ENCODE measurements at regions of chr2 and their contacts with region 1.

Region 1: GRCh38 chr2:43194121-43194869 is 32.1 kb downstream of the ZFP36L2 start:
- DNase-seq: no peak
- H3K4me3 Mint-ChIP-seq: peak overlapping the region; percentile 79
- H3K27ac Mint-ChIP-seq: peak overlapping the region; percentile 92
- H3K4me1 Mint-ChIP-seq: peaks cover 51% of the 10 kb centered on the region
- H3K27me3 Mint-ChIP-seq: no peaks in the 10 kb centered on the region

Region 2: GRCh38 chr2:43139996-43140621 is 54.2 kb before region 1 on chr2:
- intact Hi-C with region 1: loop called (anchors 1 kb)
- DNase-seq: no peak
- H3K4me3 Mint-ChIP-seq: peak overlapping the region; percentile 74
- H3K27ac Mint-ChIP-seq: peak overlapping the region; percentile 90
- H3K4me1 Mint-ChIP-seq: peaks cover 66% of the 10 kb centered on the region
- H3K27me3 Mint-ChIP-seq: no peaks in the 10 kb centered on the region

Region 3: GRCh38 chr2:43219383-43220228 is 25.3 kb after region 1 on chr2:
- intact Hi-C with region 1: loop called (anchors 1 kb)
- DNase-seq: peak; percentile 78
- H3K4me3 Mint-ChIP-seq: peak overlapping the region; percentile 94
- H3K27ac Mint-ChIP-seq: peak overlapping the region; percentile 88
- H3K4me1 Mint-ChIP-seq: peaks cover 48% of the 10 kb centered on the region
- H3K27me3 Mint-ChIP-seq: no peaks in the 10 kb centered on the region

Measured in activated T-helper 1 cell treated with anti-CD3 and anti-CD28 coated beads, Interleukin-12 subunit alpha, Interleukin-12 subunit beta, Interleukin-2, Interleukin-4 antibody, amounts not matched to agents 30 ng/mL and 10 ng/mL and 1 ng/mL, durations not matched to agents 14 hours and 24 hours and 36 hours (primary cell).